ENCODE measurements at regions of chr20 and their contacts with region 1.

Region 1: DNA sequence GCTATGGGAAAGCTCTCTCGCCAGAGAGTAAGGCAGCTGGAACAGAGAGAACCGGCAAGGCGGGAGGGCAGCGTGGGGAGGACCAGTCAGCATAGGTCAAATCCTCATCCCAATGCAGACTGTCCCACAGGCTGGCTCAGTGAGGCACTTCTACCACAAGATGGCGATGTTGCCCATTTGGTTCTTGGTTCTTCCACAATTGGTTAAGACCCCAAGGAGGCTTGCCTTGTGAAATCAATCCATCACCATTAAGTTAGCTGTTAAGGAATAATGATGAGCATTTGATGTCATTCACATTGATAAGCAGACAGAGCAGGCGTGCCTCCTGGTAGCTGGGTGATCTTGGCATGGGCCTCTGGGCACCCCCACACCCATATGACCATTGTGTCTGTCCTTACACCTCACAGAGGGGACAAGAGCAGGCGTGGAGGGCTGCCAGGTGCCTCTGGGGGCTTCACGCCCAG is 2.4 kb downstream of the CSTL1 start:
- DNase-seq: peak; percentile 88 to 93
- H3K4me3 ChIP-seq: no peak overlapping the region
- H3K27ac ChIP-seq: no peak overlapping the region
- H3K4me1 ChIP-seq: no peaks in the 10 kb centered on the region; a peak in 1 of 7 replicates
- H3K27me3 ChIP-seq: no peaks in the 10 kb centered on the region
- CTCF ChIP-seq: peak; percentile 88 to 97 (median 88)
- EP300 ChIP-seq: no peak
- POLR2A ChIP-seq: no peak
- RAD21 ChIP-seq: peak; percentile 96 to 98

Region 2: GRCh38 chr20:23315099-23315498 is 126.8 kb before region 1 on chr20:
- CTCF ChIA-PET with region 1: no interaction called
- POLR2A ChIA-PET with region 1: no interaction called
- DNase-seq: no peak
- H3K4me3 ChIP-seq: no peak overlapping the region
- H3K27ac ChIP-seq: no peak overlapping the region
- H3K4me1 ChIP-seq: no peaks in the 10 kb centered on the region
- H3K27me3 ChIP-seq: no peaks in the 10 kb centered on the region
- CTCF ChIP-seq: no peak
- EP300 ChIP-seq: no peak
- POLR2A ChIP-seq: no peak
- RAD21 ChIP-seq: no peak

Region 3: DNA sequence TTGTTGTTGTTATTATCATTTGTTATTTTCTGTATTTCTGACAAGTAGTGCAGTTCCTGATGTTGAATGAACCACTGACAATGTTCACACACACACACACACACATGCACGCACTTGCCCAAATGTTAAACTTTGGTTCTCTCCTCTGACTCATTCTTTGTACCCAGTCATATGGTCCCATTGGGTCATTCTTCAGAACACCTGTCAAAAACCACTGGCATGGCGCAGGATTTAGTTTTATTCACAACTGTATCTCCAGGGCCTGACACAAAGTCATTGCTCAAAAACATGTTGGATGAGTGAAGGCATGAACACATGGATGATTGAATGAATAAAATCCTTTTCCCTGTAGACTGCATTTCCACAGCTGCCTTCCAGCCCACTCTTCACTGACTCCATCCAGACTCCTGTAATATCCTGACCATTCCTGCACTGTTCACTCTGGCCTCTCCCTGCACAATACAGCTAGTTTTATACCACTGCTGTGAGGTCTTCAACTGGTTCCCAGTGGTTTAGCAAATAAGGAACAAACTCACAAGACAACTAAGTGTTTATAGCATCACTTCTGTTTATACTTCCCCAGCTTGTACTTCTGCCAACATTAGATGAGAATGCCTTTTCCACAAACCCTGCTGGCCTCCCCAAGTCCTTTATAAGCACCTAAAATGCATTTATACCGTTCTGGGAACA is 17.7 kb after region 1 on chr20:
- CTCF ChIA-PET with region 1: interaction called, 15 read pairs
- POLR2A ChIA-PET with region 1: no interaction called
- DNase-seq: no peak
- H3K4me3 ChIP-seq: no peak overlapping the region
- H3K27ac ChIP-seq: no peak overlapping the region
- H3K4me1 ChIP-seq: peaks cover 0 to 7% (median 0%) of the 10 kb centered on the region in 4 experiments; a peak in 1 of 7 replicates
- H3K27me3 ChIP-seq: no peaks in the 10 kb centered on the region
- CTCF ChIP-seq: no peak
- EP300 ChIP-seq: no peak
- POLR2A ChIP-seq: no peak
- RAD21 ChIP-seq: no peak

Region 4: DNA sequence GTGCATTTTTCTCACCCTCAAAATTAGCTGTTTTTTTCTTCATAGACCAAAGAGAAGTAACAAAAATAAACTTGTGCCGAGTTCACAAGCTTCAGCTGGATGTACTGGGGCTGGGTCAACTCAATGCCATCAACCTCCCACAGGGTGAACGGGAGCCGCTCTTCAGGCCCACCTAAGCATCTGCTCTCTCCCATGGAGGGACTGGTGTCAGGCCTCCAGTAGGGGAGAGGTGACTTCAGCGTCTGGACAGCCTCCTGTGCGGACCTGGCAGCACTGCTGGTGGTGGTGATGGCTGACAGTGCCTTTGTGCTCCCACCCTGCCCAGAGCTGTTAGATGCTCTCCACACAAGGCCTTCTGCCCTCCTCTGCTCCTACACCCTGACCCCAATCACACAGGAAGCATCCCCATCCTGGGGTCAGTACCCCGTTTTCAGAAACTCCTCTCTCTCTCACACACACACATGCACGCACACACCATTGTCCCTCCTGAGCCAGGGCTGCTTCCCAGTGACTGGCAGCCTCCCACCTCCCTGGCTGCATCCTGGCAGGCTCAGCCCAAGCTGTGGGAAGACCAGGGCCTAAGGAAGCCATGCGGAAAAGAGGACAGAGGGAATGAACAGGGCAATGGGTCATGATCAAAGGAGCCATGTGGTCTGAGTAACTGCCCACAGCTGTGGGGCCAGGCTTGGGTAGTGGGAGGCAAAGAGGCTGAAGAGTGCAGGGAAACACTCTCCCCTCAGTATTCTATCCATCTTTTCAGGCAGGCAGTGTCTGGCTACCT is 66.8 kb after region 1 on chr20:
- CTCF ChIA-PET with region 1: interaction called, 11 read pairs
- POLR2A ChIA-PET with region 1: no interaction called
- DNase-seq: no peak
- H3K4me3 ChIP-seq: no peak overlapping the region
- H3K27ac ChIP-seq: no peak overlapping the region
- H3K4me1 ChIP-seq: peaks cover 0 to 15% (median 5%) of the 10 kb centered on the region in 4 experiments; a peak in 5 of 7 replicates
- H3K27me3 ChIP-seq: peaks cover 0 to 3% (median 1%) of the 10 kb centered on the region in 4 experiments; a peak in 1 of 7 replicates
- CTCF ChIP-seq: no peak
- EP300 ChIP-seq: no peak
- POLR2A ChIP-seq: no peak
- RAD21 ChIP-seq: no peak

Region 5: DNA sequence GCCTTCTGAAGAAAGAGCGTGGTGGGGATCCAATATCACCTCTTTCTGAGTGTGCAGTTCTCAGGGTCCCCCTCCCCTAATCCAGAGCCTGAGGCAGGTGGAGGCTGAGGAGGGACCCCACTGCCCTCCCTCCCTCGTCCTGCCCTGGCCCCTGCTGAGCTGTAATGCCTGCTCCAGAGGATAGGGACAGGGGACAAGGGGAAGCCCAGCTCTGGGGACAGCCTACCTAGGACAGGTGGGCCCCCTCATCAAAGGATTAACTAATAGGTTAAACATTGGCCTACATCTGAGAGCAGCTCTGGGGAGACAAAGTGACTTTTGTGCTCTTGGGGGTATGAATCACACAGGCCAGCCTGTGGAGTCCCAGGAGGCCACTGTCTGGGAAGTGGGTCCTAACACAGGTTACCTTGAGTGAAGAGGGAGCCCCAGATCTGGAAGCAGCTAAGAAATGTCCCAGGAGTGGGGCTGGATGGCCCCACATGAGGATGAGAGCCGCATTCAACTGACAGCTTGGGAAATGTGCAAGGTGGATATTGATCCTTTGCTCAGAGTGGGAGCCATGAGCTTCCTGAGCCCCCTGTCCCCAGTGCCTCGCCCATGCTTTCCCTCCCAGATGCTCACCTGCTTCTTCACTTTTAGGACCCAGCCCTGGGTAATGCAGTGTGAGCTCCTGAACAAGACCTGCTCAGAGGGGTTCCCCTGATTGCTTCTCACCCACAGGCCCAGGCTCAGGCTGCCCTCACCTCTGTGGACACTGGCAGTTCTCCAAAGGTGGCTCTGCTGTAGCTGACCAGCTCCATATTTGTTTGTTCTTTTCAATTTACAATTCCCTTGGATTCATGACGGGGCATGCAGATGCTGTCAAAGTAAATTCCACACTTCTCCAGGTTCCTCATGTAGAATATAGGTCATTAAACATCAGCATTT is 144.2 kb after region 1 on chr20:
- CTCF ChIA-PET with region 1: interaction called, 99 read pairs
- POLR2A ChIA-PET with region 1: no interaction called
- DNase-seq: peak in 1 of 2 experiments; percentile 37
- H3K4me3 ChIP-seq: no peak overlapping the region
- H3K27ac ChIP-seq: no peak overlapping the region
- H3K4me1 ChIP-seq: peaks cover 0 to 2% (median 0%) of the 10 kb centered on the region in 4 experiments; a peak in 1 of 7 replicates
- H3K27me3 ChIP-seq: no peaks in the 10 kb centered on the region; a peak in 1 of 7 replicates
- CTCF ChIP-seq: no peak
- EP300 ChIP-seq: no peak
- POLR2A ChIP-seq: no peak
- RAD21 ChIP-seq: no peak

Region 6: DNA sequence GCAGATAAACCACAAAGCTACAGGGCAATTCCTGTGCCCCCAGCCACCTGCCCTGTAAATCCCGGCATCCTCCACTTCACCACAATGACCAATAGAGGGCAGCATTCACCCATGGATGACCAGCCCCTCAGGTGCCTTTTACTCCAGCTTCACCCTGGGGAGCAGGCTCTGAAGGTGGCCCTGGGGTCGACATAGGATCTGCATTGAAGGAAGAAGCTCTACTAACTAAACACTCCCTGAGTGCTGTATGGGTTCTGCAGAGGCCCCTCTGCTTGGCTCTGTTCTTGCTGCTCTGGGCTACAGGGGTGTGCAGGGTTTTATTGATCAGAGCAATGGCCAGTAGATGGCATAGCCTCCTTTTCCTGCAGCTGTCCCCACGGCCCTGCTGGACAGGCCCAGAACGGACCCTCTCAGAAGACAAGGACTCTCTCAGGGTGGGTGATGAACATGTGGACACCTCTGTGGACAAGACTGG is 226.6 kb after region 1 on chr20:
- CTCF ChIA-PET with region 1: interaction called, 11 read pairs
- POLR2A ChIA-PET with region 1: no interaction called
- DNase-seq: peak; percentile 19 to 88
- H3K4me3 ChIP-seq: no peak overlapping the region
- H3K27ac ChIP-seq: no peak overlapping the region
- H3K4me1 ChIP-seq: no peaks in the 10 kb centered on the region
- H3K27me3 ChIP-seq: no peaks in the 10 kb centered on the region
- CTCF ChIP-seq: peak; percentile 80 to 90 (median 86)
- EP300 ChIP-seq: no peak
- POLR2A ChIP-seq: no peak
- RAD21 ChIP-seq: peak; percentile 89